ENCODE measurements at regions of chr17 and their contacts with region 1.

Region 1: GRCh38 chr17:42609182-42609813 is at the starts of genes RETREG3 and TUBG1:
- DNase-seq: peak; percentile 96
- H3K4me3 ChIP-seq: peak within 1 kb of the TSS; percentile 82
- H3K27ac ChIP-seq: peak within 1 kb of the TSS; percentile 84
- H3K4me1 ChIP-seq: no peaks in the 10 kb centered on the region
- H3K27me3 ChIP-seq: no peaks in the 10 kb centered on the region
- CTCF ChIP-seq: no peak
- total RNA-seq, gene RETREG3: 23.2 and 30.0 TPM in 2 replicates
- total RNA-seq, gene TUBG1: 85.8 and 87.4 TPM in 2 replicates

Region 2: DNA sequence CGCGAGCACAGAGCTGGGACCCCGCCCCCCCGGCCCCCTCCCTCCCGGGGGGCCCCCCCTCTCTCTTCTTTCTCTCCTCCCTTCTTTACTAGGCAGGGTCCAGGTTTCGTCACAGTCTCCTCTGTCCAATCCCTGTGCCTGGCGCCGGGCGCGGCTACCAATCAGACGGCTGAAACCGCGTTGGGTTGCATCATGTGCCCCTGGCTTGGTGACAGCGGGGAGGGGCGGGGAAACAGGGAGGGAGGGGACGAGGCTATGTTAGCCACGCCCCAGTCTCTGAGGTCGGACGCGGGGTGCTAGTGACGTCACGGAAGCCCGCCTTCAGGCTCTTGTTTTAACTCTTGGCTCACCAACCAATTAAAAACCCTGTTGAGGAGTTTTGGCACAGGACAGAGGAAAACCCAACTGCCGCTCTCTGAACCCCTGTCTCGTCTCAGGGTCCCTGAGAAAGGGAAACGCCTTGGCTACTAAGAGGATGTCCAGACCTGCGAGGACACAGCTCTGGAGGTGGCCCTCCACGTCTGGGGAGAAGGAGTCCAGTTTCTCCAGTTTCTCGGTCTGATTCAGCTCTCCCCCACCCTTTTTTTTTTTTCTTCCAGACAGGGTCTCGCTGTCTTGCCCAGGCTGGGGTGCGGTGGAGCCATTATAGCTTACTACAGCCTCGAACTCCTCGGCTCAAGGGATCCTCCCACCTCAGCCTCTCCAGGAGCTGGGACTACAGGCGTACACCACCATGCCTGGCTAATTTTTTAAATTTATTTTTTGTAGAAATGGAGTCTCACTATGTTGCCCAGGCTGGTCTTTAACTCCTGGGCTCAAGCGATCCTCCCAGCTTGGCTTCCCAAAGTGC is 67.9 kb after region 1 on chr17:
- CTCF ChIA-PET with region 1: no interaction called
- POLR2A ChIA-PET with region 1: no interaction called
- intact Hi-C with region 1: loop called (anchors 2 kb)
- DNase-seq: peak; percentile 96
- H3K4me3 ChIP-seq: peak overlapping the region; percentile 77
- H3K27ac ChIP-seq: peak overlapping the region; percentile 88
- H3K4me1 ChIP-seq: peaks cover 22% of the 10 kb centered on the region
- H3K27me3 ChIP-seq: no peaks in the 10 kb centered on the region
- CTCF ChIP-seq: no peak

Region 3: GRCh38 chr17:42744806-42745617 is 135.7 kb after region 1 on chr17 and contains the start of gene EZH1:
- CTCF ChIA-PET with region 1: no interaction called
- POLR2A ChIA-PET with region 1: no interaction called
- intact Hi-C with region 1: no loop called
- DNase-seq: peak; percentile 90
- H3K4me3 ChIP-seq: peak within 1 kb of the TSS; percentile 59
- H3K27ac ChIP-seq: peak within 1 kb of the TSS; percentile 58
- H3K4me1 ChIP-seq: no peaks in the 10 kb centered on the region
- H3K27me3 ChIP-seq: no peaks in the 10 kb centered on the region
- CTCF ChIP-seq: no peak
- total RNA-seq, gene EZH1: 16.4 and 19.5 TPM in 2 replicates